ENCODE measurements at regions of chr11 and their contacts with region 1.

Region 1: DNA sequence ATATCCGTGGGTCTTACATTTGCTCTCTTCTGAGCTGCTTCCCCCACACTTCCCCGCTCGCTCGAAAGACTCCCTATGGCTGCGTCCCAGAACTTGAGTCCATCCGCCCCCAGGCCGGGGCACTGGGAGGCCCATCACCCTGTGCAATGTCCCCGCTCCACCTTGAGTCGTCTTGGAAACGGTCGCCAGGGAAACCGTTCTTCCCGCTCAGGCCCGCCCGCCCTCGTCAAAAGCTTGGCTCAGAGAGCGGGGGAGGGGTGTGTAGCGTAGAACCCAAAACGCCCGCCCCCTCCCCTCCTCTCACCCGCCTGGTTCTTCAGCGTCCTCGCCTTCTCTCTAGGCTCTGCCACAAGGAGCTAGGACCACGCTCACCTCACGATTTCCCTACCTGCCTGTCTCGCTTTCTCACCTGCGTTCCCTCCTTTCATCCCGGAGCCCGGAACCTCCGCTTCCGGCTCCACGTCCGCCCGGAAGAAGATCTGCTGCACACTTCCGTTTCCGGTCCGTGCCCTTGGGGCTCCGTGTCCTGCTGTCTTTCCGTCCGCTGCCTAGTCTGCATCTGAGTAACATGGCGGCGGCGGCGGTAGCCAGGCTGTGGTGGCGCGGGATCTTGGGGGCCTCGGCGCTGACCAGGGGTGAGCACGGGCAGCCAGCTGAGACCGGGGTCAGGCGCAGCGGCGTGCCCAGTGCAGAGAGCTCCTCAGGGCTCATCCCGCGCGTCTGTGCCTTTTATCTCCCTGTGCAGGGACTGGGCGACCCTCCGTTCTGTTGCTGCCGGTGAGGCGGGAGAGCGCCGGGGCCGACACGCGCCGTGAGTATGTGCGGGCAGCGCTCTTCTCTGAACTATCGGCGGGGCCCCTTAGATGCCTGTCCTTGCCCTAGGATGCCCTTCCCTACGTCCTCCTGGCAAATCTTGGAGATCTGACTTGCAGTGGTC is at the starts of genes KBTBD4 and NDUFS3:
- DNase-seq: peak; percentile 83 to 84
- ATAC-seq: peak; percentile 96 to 98
- H3K4me3 ChIP-seq: peak within 1 kb of the TSS; percentile 79 to 98 (median 82)
- H3K27ac ChIP-seq: peak within 1 kb of the TSS; percentile 89 to 94 (median 91)
- H3K4me1 ChIP-seq: peaks cover 28 to 33% of the 10 kb centered on the region in 2 donors
- H3K27me3 ChIP-seq: no peaks in the 10 kb centered on the region
- CTCF ChIP-seq: no peak
- POLR2A ChIP-seq: peak; percentile 52 to 53
- total RNA-seq, gene KBTBD4: 25.0 to 35.6 (median 30.4) TPM
- total RNA-seq, gene NDUFS3: 143 to 240 (median 194) TPM

Region 2: GRCh38 chr11:47628026-47628425 is 49.2 kb after region 1 on chr11:
- in situ Hi-C with region 1: loop called in 1 of 4 experiments (anchors 5 kb)
- intact Hi-C with region 1: no loop called
- DNase-seq: no peak
- ATAC-seq: no peak
- H3K4me3 ChIP-seq: no peak overlapping the region
- H3K27ac ChIP-seq: no peak overlapping the region
- H3K4me1 ChIP-seq: no peaks in the 10 kb centered on the region
- H3K27me3 ChIP-seq: no peaks in the 10 kb centered on the region
- CTCF ChIP-seq: no peak
- POLR2A ChIP-seq: no peak

Region 3: DNA sequence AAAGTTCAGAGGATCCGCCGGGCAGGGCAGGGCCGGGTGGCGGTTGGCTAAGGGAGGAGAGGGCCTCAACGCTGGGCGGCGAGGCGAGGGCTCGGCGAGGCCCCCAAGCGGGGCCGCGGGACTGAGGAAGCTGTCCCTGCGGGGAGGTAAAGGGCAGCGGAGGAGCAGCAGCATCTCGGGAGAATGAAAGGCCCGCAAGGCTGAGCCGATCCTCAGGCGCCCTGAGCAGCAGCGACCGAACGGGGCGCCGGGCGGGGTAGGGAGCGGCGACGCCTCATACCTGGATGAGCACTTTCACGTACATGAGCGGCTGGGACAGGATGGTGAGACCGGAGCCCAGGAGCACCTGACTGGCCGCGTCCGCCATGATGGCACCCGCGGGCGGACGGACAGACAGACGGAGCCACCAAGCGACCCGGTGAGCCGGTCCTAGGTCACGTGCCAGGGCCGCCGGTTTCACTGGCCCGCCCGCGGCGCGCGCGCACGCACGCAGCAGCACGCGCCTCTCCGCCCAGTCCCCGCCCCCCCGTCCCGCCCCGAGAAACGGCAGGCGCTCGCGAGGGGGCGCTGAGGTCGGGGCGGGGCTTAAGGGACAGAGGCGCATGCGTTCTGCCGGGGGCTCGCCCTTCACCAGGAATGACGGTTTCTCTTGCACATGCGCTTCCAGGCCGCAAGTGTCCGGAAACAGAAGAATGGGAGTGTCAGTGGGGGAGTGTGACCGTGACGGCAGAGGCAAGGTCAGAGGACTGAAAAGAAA is 63.5 kb after region 1 on chr11 and contains the start of gene MTCH2:
- in situ Hi-C with region 1: no loop called
- intact Hi-C with region 1: loop called (anchors 1 kb)
- DNase-seq: peak; percentile 94 to 95
- ATAC-seq: peak; percentile 95 to 96
- H3K4me3 ChIP-seq: peak within 1 kb of the TSS; percentile 70 to 100 (median 88)
- H3K27ac ChIP-seq: peak within 1 kb of the TSS; percentile 89 to 100 (median 99)
- H3K4me1 ChIP-seq: peaks cover 20 to 22% of the 10 kb centered on the region in 2 donors
- H3K27me3 ChIP-seq: no peaks in the 10 kb centered on the region
- CTCF ChIP-seq: peak in 3 of 5 experiments; percentile 35 to 56 (median 49)
- POLR2A ChIP-seq: peak; percentile 86 to 88
- total RNA-seq, gene MTCH2: 70.3 to 139 (median 85.6) TPM

Region 4: DNA sequence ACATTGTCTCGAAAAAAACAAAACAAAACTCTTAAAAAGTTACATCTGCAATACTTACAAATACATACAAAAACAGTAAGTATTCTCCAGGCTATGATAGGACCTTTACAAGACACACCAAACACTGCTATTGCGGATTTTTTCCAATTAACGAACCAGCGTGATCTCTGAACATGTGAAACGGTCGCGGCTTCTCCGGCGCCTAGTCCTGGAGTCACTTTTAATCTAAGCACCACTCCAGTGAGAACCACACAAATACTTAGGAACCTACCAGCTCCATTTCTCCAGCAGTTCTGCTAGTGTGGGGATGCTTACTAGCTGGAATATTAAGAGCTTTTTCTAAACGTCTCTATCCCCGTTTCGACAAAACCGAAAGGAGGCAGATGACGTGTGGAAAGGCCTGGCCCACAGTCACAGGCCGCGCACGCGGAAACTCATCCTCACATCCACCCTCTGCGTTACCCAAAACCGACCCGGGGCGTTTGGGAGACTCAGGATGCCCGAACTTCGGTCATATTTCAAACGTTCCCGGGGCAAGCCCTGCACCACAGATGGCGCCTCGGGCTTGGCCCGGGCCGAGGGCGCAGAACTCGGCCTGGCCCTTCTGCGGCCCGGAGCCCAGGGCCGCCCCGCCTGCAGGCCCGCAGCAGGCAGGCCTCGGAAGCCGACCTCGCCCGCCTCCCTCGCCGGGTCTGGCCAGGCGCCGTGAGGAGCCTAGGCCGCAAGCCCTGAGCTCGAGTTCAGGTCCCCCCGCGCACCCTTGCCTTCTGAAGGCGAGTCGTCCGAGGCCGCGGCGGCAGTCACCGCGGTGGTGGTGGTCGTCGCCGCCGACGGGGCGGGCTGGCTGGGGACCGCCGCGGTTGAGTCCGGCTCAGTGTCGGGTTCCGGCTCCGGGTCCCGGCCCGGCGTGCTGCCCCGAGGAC is 187.8 kb after region 1 on chr11:
- in situ Hi-C with region 1: no loop called
- intact Hi-C with region 1: loop called (anchors 10 kb)
- DNase-seq: peak; percentile 64 to 72
- ATAC-seq: peak; percentile 52 to 57
- H3K4me3 ChIP-seq: peak overlapping the region; percentile 70 to 88 (median 75)
- H3K27ac ChIP-seq: peak overlapping the region; percentile 90 to 98 (median 96)
- H3K4me1 ChIP-seq: peaks cover 19 to 22% of the 10 kb centered on the region in 2 donors
- H3K27me3 ChIP-seq: no peaks in the 10 kb centered on the region
- CTCF ChIP-seq: peak in 1 of 5 experiments; percentile 8
- POLR2A ChIP-seq: no peak

Measured in gastrocnemius medialis (tissue), 4 donors.